ENCODE measurements at regions of chr9 and their contacts with region 1.

Region 1: DNA sequence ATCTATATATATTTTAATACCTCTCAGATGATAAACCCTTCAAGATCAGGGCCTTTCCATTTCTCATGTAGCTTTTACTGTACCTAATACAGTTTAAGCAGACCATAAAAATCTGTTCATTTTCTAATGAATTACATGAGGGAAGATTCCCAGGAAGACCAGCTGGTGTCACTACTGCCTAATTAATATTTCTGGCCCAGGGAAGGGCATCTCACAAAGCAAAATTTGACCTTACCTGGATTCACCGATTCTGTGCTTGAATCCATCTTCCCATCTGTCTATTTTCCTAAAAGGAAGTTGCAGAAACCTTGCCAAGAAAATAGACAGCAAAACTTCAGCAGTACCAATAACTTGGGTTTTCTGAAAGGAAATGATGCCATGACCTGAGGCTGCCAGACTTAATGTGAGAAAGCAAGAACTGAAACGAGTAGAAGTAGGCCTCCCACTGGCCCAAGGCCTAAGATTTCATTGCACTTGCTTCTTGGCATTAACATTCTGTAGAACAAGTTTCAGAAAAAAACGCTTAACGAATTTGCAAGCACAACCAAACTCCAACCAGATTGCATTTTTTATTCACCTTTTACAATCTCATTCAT is 83.0 kb upstream of the GLIS3 start:
- DNase-seq: peak; percentile 38
- H3K4me3 ChIP-seq: no peak overlapping the region
- H3K27ac ChIP-seq: no peak overlapping the region
- H3K4me1 ChIP-seq: peaks cover 0 to 4% of the 10 kb centered on the region in 2 experiments; a peak in 2 of 4 replicates
- H3K27me3 ChIP-seq: no peaks in the 10 kb centered on the region
- CTCF ChIP-seq: peak; percentile 72
- EP300 ChIP-seq: no peak
- RAD21 ChIP-seq: peak; percentile 78

Region 2: DNA sequence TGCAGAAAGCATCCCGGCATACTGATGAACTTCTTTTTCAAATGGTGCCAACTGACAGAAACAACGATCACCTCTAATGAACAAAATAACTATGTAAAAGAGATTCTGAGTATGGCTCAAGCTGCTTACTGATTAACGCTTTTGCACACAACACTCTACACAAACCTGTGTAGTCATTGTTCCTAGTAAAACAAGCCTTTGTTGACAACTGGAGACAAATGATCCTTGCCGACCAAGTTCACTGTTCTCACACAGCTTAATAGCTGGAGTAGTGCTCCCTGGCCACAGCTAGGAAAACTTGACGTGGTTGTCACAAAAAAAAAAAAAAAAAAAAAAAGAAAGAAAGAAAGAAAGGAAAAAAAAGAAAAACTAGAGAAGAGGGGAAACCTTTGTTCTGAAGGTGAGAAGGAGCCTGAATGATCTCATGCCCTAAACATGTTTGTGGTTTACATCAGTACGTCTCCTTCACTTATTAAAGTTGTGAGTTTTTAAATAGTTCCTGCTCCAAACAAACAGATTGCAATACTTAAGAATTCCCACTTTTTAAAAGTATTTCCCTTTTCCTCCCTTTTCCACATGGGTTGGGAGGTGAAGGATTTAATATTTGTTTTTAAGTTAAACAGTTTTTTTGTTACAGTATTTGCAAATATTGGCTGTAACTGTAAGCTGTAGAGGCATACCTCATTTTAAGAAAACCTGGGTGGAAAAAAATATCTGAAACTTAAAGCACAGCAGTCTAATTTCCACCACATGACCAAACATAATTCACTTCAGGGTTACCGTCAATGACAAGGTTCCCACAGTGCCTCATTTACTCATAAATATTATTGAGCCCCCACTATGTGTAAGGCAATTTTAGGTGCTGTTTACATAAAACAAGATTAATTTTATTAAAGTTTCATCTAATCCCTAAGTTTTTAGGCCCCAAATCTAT is 146.7 kb before region 1 on chr9:
- CTCF ChIA-PET with region 1: no interaction called
- POLR2A ChIA-PET with region 1: no interaction called
- DNase-seq: no peak
- H3K4me3 ChIP-seq: no peak overlapping the region
- H3K27ac ChIP-seq: peak overlapping the region; percentile 55 to 89; a peak in 3 of 4 replicates
- H3K4me1 ChIP-seq: peaks cover 0 to 8% of the 10 kb centered on the region in 2 experiments; a peak in 2 of 4 replicates
- H3K27me3 ChIP-seq: no peaks in the 10 kb centered on the region
- CTCF ChIP-seq: no peak
- EP300 ChIP-seq: no peak
- RAD21 ChIP-seq: no peak

Region 3: GRCh38 chr9:4461437-4461836 is 78.6 kb after region 1 on chr9:
- CTCF ChIA-PET with region 1: no interaction called
- POLR2A ChIA-PET with region 1: no interaction called
- DNase-seq: no peak
- H3K4me3 ChIP-seq: no peak overlapping the region
- H3K27ac ChIP-seq: no peak overlapping the region
- H3K4me1 ChIP-seq: no peaks in the 10 kb centered on the region
- H3K27me3 ChIP-seq: no peaks in the 10 kb centered on the region; the same call in 1 of the 2 replicates
- CTCF ChIP-seq: no peak
- EP300 ChIP-seq: no peak
- RAD21 ChIP-seq: no peak

Region 4: DNA sequence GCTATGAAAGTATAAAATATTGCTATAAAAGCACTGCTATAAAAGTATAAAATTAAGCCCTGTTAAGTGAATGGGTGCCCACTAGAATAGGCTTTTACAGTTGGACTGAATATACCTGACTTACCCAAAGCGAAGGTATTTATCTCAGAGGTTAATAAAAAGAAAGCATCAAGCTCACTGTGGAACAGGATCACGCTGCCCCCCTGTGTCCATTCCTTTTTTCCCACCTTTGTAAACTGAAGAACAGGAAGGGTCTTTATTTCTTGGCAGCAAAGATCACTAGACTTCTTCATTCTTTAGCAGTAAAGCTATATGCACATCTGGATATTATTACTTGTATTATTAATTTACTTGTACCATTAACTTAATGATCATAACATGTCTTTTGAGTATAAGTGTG is 257.2 kb after region 1 on chr9:
- CTCF ChIA-PET with region 1: interaction called, 21 read pairs
- POLR2A ChIA-PET with region 1: no interaction called
- DNase-seq: peak; percentile 53
- H3K4me3 ChIP-seq: no peak overlapping the region
- H3K27ac ChIP-seq: no peak overlapping the region
- H3K4me1 ChIP-seq: no peaks in the 10 kb centered on the region; a peak in 1 of 4 replicates
- H3K27me3 ChIP-seq: no peaks in the 10 kb centered on the region; the same call in 1 of the 2 replicates
- CTCF ChIP-seq: peak; percentile 69
- EP300 ChIP-seq: no peak
- RAD21 ChIP-seq: peak; percentile 75